ENCODE measurements at regions of chr1 and their contacts with region 1.

Region 1: DNA sequence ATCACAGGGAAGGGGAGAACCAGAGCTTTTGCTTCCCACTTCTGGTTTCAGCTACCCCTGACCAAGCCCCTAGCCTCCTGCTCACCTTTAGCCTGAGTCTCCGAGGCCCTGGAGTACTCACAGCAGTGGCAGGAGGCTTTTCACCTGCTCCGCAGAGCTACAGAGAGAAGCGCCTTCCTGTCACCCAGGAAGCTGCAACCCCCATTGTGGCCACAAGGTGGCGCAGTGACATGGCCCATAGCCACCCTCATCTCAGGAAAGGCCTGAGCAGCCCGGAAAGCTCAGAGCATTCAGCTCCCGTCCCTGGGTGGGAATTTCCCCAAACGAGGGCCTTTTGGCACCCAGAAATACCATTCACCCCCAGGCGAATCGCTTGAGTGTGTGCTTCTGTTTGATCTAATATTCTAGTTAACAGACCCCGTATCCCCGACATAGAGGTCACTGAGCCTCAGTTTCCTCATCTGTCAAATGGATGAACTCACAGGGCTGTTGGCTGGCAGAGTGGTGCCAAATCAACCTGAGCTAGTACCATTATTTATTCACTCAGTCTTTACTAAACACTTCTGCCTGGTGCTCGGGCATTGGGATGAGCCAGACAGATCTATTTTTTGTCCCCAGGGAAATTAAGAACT is 25.3 kb downstream of the A3GALT2 start:
- DNase-seq: peak; percentile 76 to 83 (median 80)
- H3K4me3 ChIP-seq: no peak overlapping the region
- H3K4me3 Mint-ChIP-seq: no peak overlapping the region
- H3K27ac ChIP-seq: no peak overlapping the region
- H3K27ac Mint-ChIP-seq: peak overlapping the region in 3 of 7 donors; percentile 41 to 72 (median 52)
- H3K4me1 ChIP-seq: peaks cover 12% of the 10 kb centered on the region
- H3K4me1 Mint-ChIP-seq: peaks cover 7 to 22% (median 12%) of the 10 kb centered on the region in 4 donors
- H3K27me3 ChIP-seq: no peaks in the 10 kb centered on the region
- H3K27me3 Mint-ChIP-seq: no peaks in the 10 kb centered on the region

Region 2: DNA sequence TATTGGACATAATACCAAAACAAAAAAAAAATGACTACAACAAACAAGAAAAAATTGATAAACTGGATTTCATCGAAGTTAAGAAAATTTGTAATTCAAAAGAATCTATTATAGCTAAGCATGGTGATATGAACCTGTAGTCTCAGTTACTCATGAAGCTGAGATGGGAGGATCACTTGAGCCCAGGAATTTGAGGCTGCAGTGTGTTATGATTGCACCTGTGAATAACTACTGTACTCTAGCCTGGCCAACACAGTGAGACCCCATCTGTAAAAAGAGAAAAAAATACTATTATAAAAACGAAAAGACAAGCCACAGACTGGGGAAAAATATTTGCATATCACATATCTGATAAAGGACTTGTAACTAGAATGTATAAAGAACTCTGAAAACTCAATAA is 89.2 kb before region 1 on chr1:
- CTCF ChIA-PET with region 1: no interaction called
- POLR2A ChIA-PET with region 1: no interaction called
- intact Hi-C with region 1: no loop called
- DNase-seq: no peak
- H3K4me3 ChIP-seq: no peak overlapping the region
- H3K4me3 Mint-ChIP-seq: no peak overlapping the region
- H3K27ac ChIP-seq: no peak overlapping the region
- H3K27ac Mint-ChIP-seq: no peak overlapping the region
- H3K4me1 ChIP-seq: no peaks in the 10 kb centered on the region
- H3K4me1 Mint-ChIP-seq: no peaks in the 10 kb centered on the region
- H3K27me3 ChIP-seq: no peaks in the 10 kb centered on the region
- H3K27me3 Mint-ChIP-seq: peaks cover 7 to 10% of the 10 kb centered on the region in 2 donors

Region 3: DNA sequence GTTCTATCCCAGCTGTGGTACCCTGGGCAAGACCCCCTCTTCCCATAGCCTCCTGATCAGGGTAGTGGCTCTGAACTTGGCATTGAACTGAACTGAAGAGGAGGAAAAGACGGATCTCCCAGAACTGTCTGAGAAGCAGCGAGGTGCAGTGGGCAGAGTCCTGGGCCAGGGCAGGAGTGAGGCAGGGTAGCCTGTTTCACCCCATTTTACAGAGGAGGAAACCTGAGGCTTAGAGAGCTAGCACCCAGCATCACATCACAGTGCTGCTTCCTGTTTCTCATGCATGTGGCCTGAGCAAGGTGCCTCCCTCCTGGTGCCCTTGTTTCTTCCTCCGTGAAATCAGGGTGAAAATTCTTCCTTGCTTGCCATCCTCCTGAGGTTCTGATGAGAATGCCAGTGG is 22.2 kb before region 1 on chr1:
- CTCF ChIA-PET with region 1: interaction called, 10 read pairs
- POLR2A ChIA-PET with region 1: no interaction called
- intact Hi-C with region 1: no loop called
- DNase-seq: peak in 3 of 5 donors; percentile 8 to 20 (median 12)
- H3K4me3 ChIP-seq: no peak overlapping the region
- H3K4me3 Mint-ChIP-seq: peak overlapping the region in 4 of 8 donors; percentile 39 to 55 (median 44)
- H3K27ac ChIP-seq: peak overlapping the region; percentile 36
- H3K27ac Mint-ChIP-seq: peak overlapping the region; percentile 80 to 93 (median 84)
- H3K4me1 ChIP-seq: peaks cover 23% of the 10 kb centered on the region
- H3K4me1 Mint-ChIP-seq: peaks cover 25 to 44% (median 28%) of the 10 kb centered on the region in 4 donors
- H3K27me3 ChIP-seq: no peaks in the 10 kb centered on the region
- H3K27me3 Mint-ChIP-seq: no peaks in the 10 kb centered on the region

Region 4: DNA sequence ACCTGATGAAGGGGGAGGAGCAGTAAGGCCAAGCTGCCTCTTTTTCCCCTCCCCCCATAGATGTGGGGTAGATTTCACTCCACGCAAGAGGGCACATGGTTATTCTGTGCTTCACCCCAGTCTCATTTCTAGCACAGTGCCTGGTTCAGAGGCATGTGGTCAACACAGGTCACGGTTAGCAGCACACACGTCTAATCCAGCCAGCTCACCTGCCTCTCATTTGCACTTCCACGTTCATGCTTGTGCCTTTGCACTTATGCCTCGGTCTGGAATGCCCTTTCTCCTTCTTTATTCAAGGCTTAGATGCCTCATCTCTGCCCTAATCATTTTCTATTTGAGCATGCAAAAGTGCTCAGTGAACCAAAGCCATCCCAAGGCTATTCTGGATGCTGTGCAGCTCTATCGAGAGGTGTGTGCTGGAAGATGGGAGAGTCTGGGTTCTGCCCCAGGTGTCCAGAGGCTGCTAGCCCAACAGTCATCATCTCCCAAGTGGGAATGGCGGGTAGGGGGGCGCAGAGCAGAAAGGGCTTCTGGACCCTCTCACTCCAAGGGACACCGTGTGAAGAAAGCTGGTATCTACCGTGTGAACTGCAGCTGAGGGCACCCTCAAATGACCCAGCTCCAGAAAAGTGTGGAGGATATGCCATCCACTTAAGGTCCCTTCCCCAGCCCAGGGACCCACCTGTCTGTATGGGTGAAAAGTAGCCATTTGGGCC is 27.5 kb after region 1 on chr1:
- CTCF ChIA-PET with region 1: interaction called, 14 read pairs
- POLR2A ChIA-PET with region 1: no interaction called
- intact Hi-C with region 1: no loop called
- DNase-seq: no peak
- H3K4me3 ChIP-seq: no peak overlapping the region
- H3K4me3 Mint-ChIP-seq: no peak overlapping the region
- H3K27ac ChIP-seq: no peak overlapping the region
- H3K27ac Mint-ChIP-seq: peak overlapping the region in 1 of 7 donors; percentile 48
- H3K4me1 ChIP-seq: no peaks in the 10 kb centered on the region
- H3K4me1 Mint-ChIP-seq: no peaks in the 10 kb centered on the region
- H3K27me3 ChIP-seq: no peaks in the 10 kb centered on the region
- H3K27me3 Mint-ChIP-seq: no peaks in the 10 kb centered on the region

Region 5: GRCh38 chr1:33361532-33362235 is 66.1 kb after region 1 on chr1:
- CTCF ChIA-PET with region 1: interaction called, 179 read pairs
- POLR2A ChIA-PET with region 1: interaction called, 3 read pairs
- intact Hi-C with region 1: no loop called
- DNase-seq: no peak
- H3K4me3 ChIP-seq: no peak overlapping the region
- H3K4me3 Mint-ChIP-seq: no peak overlapping the region
- H3K27ac ChIP-seq: no peak overlapping the region
- H3K27ac Mint-ChIP-seq: peak overlapping the region in 1 of 7 donors; percentile 43
- H3K4me1 ChIP-seq: no peaks in the 10 kb centered on the region
- H3K4me1 Mint-ChIP-seq: peaks cover 0 to 2% (median under 1%) of the 10 kb centered on the region in 4 donors
- H3K27me3 ChIP-seq: no peaks in the 10 kb centered on the region
- H3K27me3 Mint-ChIP-seq: peaks cover 0 to 1% of the 10 kb centered on the region in 2 donors

Region 6: DNA sequence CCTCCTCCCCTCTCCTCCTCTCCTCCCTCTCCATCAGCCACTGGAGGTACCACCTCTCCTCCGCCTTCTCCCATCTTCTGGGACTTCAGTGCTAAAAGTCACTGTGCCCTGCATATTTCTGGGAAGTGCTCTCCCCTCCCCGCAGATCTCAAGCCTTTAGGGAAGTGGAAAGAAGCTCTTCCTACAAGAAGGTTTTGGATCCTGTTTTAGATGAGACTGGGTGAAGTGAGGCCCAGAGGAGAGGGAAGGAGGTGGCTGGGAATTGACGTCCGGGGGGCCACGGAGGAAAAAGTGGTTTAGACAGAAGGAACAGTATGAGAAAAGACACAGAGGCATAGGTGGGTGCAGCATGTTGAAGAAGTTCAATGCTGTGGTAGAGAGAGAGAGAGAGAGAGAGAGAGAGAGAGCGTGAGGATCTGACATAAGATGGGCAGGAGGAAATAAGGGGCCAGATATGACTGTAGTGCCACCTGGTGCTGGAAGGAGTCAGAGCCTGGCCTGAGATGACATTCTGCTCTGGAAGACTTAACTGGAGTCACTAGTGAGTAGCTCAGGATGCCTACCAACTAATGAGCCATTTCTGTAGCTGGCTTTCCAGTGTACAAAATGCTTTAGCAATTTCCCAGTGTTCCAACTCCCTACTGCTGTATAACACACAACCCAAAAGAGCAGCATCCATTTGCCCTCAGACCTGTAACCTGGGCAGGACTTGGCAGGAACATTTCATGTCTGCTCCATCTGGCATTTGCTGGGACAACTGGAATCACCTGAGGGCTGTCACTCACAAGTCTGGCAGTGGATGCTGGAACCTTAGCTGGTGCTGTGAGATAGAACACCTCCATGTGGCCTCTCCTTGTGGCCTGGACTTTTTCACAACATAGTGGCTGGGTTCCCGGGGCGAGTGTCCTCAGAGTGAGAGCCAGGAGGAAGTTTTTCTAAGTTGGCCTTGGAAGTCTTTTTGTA is 160.3 kb after region 1 on chr1:
- CTCF ChIA-PET with region 1: interaction called, 3 read pairs
- POLR2A ChIA-PET with region 1: no interaction called
- intact Hi-C with region 1: loop called (anchors 5 kb)
- DNase-seq: peak; percentile 33 to 46 (median 38)
- H3K4me3 ChIP-seq: no peak overlapping the region
- H3K4me3 Mint-ChIP-seq: peak overlapping the region in 1 of 8 donors; percentile 45
- H3K27ac ChIP-seq: no peak overlapping the region
- H3K27ac Mint-ChIP-seq: peak overlapping the region in 4 of 7 donors; percentile 2 to 82 (median 54)
- H3K4me1 ChIP-seq: no peaks in the 10 kb centered on the region
- H3K4me1 Mint-ChIP-seq: peaks cover 0 to 3% (median under 1%) of the 10 kb centered on the region in 4 donors
- H3K27me3 ChIP-seq: no peaks in the 10 kb centered on the region
- H3K27me3 Mint-ChIP-seq: peaks cover 0 to 5% of the 10 kb centered on the region in 2 donors

Measured in CD4-positive, alpha-beta memory T cell (primary cell).